ENCODE measurements at regions of chr5 and their contacts with region 1.

Region 1: GRCh38 chr5:76766746-76767145 is 50.8 kb downstream of the F2R start:
- DNase-seq: no peak
- ATAC-seq: no peak
- H3K4me3 ChIP-seq: no peak overlapping the region
- H3K27ac ChIP-seq: no peak overlapping the region
- H3K4me1 ChIP-seq: no peaks in the 10 kb centered on the region
- H3K27me3 ChIP-seq: no peaks in the 10 kb centered on the region
- CTCF ChIP-seq: no peak
- POLR2A ChIP-seq: no peak

Region 2: GRCh38 chr5:76660360-76660759 is 106.4 kb before region 1 on chr5:
- intact Hi-C with region 1: no loop called
- DNase-seq: no peak
- ATAC-seq: no peak
- H3K4me3 ChIP-seq: no peak overlapping the region
- H3K27ac ChIP-seq: peak overlapping the region in 2 of 3 donors; percentile 12 to 15
- H3K4me1 ChIP-seq: no peaks in the 10 kb centered on the region
- H3K27me3 ChIP-seq: no peaks in the 10 kb centered on the region
- CTCF ChIP-seq: no peak
- POLR2A ChIP-seq: no peak

Region 3: GRCh38 chr5:76715736-76716455 is 50.9 kb before region 1 on chr5 and contains the start of gene F2R:
- intact Hi-C with region 1: loop called in 1 of 2 experiments (anchors 10 kb)
- DNase-seq: peak; percentile 59 to 73 (median 63)
- ATAC-seq: peak; percentile 77 to 89 (median 88)
- H3K4me3 ChIP-seq: peak within 1 kb of the TSS; percentile 59 to 62 (median 60)
- H3K27ac ChIP-seq: peak within 1 kb of the TSS; percentile 47 to 79 (median 56)
- H3K4me1 ChIP-seq: peaks cover 0 to 7% (median 0%) of the 10 kb centered on the region in 4 donors
- H3K27me3 ChIP-seq: no peaks in the 10 kb centered on the region
- CTCF ChIP-seq: peak; percentile 27 to 54 (median 50)
- POLR2A ChIP-seq: no peak
- total RNA-seq, gene F2R: 3.5 to 18.4 (median 11.4) TPM

Region 4: GRCh38 chr5:76920491-76920890 is 153.7 kb after region 1 on chr5:
- intact Hi-C with region 1: no loop called
- DNase-seq: no peak
- ATAC-seq: no peak
- H3K4me3 ChIP-seq: no peak overlapping the region
- H3K27ac ChIP-seq: no peak overlapping the region
- H3K4me1 ChIP-seq: no peaks in the 10 kb centered on the region
- H3K27me3 ChIP-seq: no peaks in the 10 kb centered on the region
- CTCF ChIP-seq: no peak
- POLR2A ChIP-seq: no peak

Measured in right lobe of liver (tissue), 6 donors.